HCT116 (cell line): ENCODE measurements at regions of chr4 and their contacts with region 1.

Region 1: DNA sequence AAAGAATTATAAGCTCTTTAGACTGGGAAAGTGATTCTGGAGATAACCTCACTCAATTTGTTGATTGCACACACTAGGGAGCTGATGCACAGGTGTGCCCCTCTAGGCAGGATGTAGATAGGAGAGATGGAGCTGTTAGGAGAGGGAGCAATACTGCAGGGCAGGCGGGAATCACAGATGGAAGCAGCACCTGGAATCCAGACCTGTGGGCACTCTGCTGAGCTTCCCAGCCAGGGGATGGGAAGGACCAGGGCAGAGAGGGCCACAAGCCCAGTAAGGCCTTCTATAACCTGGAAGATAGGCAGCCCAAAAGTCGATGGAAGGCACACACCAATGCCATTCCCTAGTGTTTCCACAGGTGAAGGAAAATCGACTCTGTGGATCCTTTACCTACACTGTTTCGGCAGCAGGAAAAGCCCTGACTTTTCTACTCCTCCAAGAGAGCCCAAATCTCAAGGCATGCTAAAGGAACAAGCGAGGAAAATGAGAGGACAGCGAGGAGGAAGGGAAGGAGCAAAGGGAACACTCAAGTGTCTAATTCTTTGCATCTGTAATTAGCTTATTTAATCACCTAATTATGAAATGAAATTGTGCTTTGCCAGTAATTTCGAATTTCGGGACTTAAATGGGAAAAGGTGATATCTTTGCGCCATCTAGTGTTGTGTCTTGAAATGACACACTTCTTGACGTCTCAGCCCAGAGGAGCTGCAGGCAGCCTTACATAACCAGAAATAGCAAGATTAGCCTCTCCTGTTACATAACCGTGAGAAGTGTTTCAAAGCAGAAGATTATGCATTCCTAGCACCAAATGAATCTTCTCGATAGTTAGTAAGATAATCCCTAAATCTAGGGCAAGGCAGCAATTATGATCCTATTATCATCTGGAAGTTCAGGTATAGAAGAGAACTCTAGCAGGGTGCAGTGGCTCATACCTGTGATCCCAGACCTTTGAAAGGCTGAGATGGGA is 31.0 kb upstream of the TLR3 start:
- DNase-seq: peak; percentile 79
- ATAC-seq: peak; percentile 90
- H3K4me3 ChIP-seq: no peak overlapping the region
- H3K27ac ChIP-seq: no peak overlapping the region
- H3K4me1 ChIP-seq: no peaks in the 10 kb centered on the region
- H3K27me3 ChIP-seq: peaks cover 5% of the 10 kb centered on the region
- CTCF ChIP-seq: peak; percentile 49 to 78 (median 72)
- POLR2A ChIP-seq: no peak
- RAD21 ChIP-seq: peak; percentile 96

Region 2: GRCh38 chr4:184745831-184746795 is 1291.9 kb before region 1 on chr4:
- CTCF ChIA-PET with region 1: no interaction called
- POLR2A ChIA-PET with region 1: no interaction called
- RAD21 ChIA-PET with region 1: no interaction called
- intact Hi-C with region 1: loop called (anchors 5 kb)
- DNase-seq: peak; percentile 29
- ATAC-seq: peak; percentile 79
- H3K4me3 ChIP-seq: no peak overlapping the region
- H3K27ac ChIP-seq: no peak overlapping the region
- H3K4me1 ChIP-seq: peaks cover 0 to 9% of the 10 kb centered on the region in 2 experiments; a peak in 1 of 4 replicates
- H3K27me3 ChIP-seq: no peaks in the 10 kb centered on the region
- CTCF ChIP-seq: peak; percentile 57 to 66 (median 57)
- POLR2A ChIP-seq: no peak
- RAD21 ChIP-seq: peak; percentile 80

Region 3: GRCh38 chr4:185471235-185472102 is 566.5 kb before region 1 on chr4 and contains the start of gene CCDC110:
- CTCF ChIA-PET with region 1: no interaction called
- POLR2A ChIA-PET with region 1: no interaction called
- RAD21 ChIA-PET with region 1: no interaction called
- intact Hi-C with region 1: loop called (anchors 5 kb)
- DNase-seq: peak; percentile 80
- ATAC-seq: peak; percentile 95
- H3K4me3 ChIP-seq: peak within 1 kb of the TSS; percentile 71
- H3K27ac ChIP-seq: peak within 1 kb of the TSS; percentile 42; the same call in 1 of the 2 replicates
- H3K4me1 ChIP-seq: peaks cover 2 to 12% of the 10 kb centered on the region in 2 experiments; a peak in 3 of 4 replicates
- H3K27me3 ChIP-seq: no peaks in the 10 kb centered on the region
- CTCF ChIP-seq: peak; percentile 33 to 51 (median 50); a peak in 5 of 6 replicates
- POLR2A ChIP-seq: no peak
- RAD21 ChIP-seq: peak; percentile 75
- total RNA-seq, gene CCDC110: 2.7 TPM

Region 4: GRCh38 chr4:185640811-185641675 is 396.9 kb before region 1 on chr4:
- CTCF ChIA-PET with region 1: interaction called, 59 read pairs
- POLR2A ChIA-PET with region 1: no interaction called
- RAD21 ChIA-PET with region 1: interaction called, 4 to 8 read pairs
- intact Hi-C with region 1: loop called (anchors 1 kb)
- DNase-seq: peak; percentile 63
- ATAC-seq: peak; percentile 78
- H3K4me3 ChIP-seq: no peak overlapping the region
- H3K27ac ChIP-seq: no peak overlapping the region
- H3K4me1 ChIP-seq: no peaks in the 10 kb centered on the region
- H3K27me3 ChIP-seq: no peaks in the 10 kb centered on the region
- CTCF ChIP-seq: peak; percentile 32 to 57 (median 51); a peak in 4 of 6 replicates
- POLR2A ChIP-seq: no peak
- RAD21 ChIP-seq: peak; percentile 66